GM12878 (cell line): ENCODE measurements at regions of chr11 and their contacts with region 1.

Region 1: DNA sequence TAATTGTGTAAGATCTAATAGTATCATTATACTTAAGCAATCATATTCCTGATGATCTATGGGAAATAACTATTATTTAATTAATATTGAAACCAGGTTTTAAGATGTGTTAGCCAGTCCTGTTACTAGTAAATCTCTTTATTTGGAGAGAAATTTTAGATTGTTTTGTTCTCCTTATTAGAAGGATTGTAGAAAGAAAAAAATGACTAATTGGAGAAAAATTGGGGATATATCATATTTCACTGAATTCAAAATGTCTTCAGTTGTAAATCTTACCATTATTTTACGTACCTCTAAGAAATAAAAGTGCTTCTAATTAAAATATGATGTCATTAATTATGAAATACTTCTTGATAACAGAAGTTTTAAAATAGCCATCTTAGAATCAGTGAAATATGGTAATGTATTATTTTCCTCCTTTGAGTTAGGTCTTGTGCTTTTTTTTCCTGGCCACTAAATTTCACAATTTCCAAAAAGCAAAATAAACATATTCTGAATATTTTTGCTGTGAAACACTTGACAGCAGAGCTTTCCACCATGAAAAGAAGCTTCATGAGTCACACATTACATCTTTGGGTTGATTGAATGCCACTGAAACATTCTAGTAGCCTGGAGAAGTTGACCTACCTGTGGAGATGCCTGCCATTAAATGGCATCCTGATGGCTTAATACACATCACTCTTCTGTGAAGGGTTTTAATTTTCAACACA is 6.4 kb downstream of the BIRC3 start:
- DNase-seq: no peak
- ATAC-seq: no peak
- H3K4me3 ChIP-seq: peak overlapping the region; percentile 49; the same call in 1 of the 2 replicates
- H3K27ac ChIP-seq: no peak overlapping the region
- H3K4me1 ChIP-seq: no peaks in the 10 kb centered on the region
- H3K27me3 ChIP-seq: no peaks in the 10 kb centered on the region
- CTCF ChIP-seq: no peak
- EP300 ChIP-seq: no peak
- POLR2A ChIP-seq: no peak
- RAD21 ChIP-seq: no peak

Region 2: GRCh38 chr11:102287964-102288724 is 35.6 kb before region 1 on chr11:
- CTCF ChIA-PET with region 1: interaction called, 86 read pairs
- POLR2A ChIA-PET with region 1: interaction called, 10 read pairs
- RAD21 ChIA-PET with region 1: interaction called, 61 read pairs
- SMC1A ChIA-PET with region 1: interaction called, 255 read pairs
- in situ Hi-C with region 1: no loop called
- intact Hi-C with region 1: no loop called
- DNase-seq: peak; percentile 78
- ATAC-seq: peak; percentile 94
- H3K4me3 ChIP-seq: peak overlapping the region; percentile 43; the same call in 1 of the 2 replicates
- H3K27ac ChIP-seq: no peak overlapping the region
- H3K4me1 ChIP-seq: no peaks in the 10 kb centered on the region
- H3K27me3 ChIP-seq: no peaks in the 10 kb centered on the region
- CTCF ChIP-seq: peak; percentile 62 to 83 (median 67)
- EP300 ChIP-seq: no peak
- POLR2A ChIP-seq: no peak
- RAD21 ChIP-seq: peak; percentile 84